GM12878 (cell line): ENCODE measurements at regions of chr21 and their contacts with region 1.

Region 1: GRCh38 chr21:36542312-36543107 is 62.6 kb upstream of the CLDN14 start:
- DNase-seq: peak; percentile 70
- ATAC-seq: peak; percentile 73
- H3K4me3 ChIP-seq: peak overlapping the region; percentile 72
- H3K27ac ChIP-seq: peak overlapping the region; percentile 59
- H3K4me1 ChIP-seq: peaks cover 12% of the 10 kb centered on the region
- H3K27me3 ChIP-seq: no peaks in the 10 kb centered on the region
- CTCF ChIP-seq: peak; percentile 70 to 79 (median 73)
- EP300 ChIP-seq: no peak; a peak in 2 of 4 replicates
- POLR2A ChIP-seq: peak; percentile 81
- RAD21 ChIP-seq: peak; percentile 87

Region 2: DNA sequence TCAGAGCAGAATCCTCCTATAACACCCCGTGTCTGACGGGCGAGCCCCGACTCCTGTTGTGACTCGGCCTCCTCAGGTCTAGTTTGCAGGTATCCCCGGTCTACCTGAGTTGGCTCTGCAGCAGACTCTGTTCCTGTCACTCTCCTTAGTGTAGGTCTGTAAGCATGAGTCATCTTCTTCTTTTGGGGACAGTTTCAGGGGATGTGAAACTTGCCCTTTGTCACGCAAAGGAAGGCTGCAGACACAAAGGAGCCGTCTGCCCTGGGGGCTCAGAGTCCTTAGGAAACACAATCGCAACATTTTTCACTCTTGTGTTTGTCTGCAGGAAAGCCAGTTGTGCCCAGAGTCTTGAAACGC is 1676.6 kb before region 1 on chr21:
- CTCF ChIA-PET with region 1: no interaction called
- POLR2A ChIA-PET with region 1: no interaction called
- RAD21 ChIA-PET with region 1: no interaction called
- SMC1A ChIA-PET with region 1: no interaction called
- in situ Hi-C with region 1: no loop called
- intact Hi-C with region 1: no loop called
- DNase-seq: peak; percentile 74
- ATAC-seq: peak; percentile 93
- H3K4me3 ChIP-seq: no peak overlapping the region; the same call in 1 of the 2 replicates
- H3K27ac ChIP-seq: peak overlapping the region; percentile 76
- H3K4me1 ChIP-seq: peaks cover 29% of the 10 kb centered on the region
- H3K27me3 ChIP-seq: no peaks in the 10 kb centered on the region; a peak in 1 of 4 replicates
- CTCF ChIP-seq: no peak
- EP300 ChIP-seq: peak; percentile 76 to 97; a peak in 3 of 4 replicates
- POLR2A ChIP-seq: no peak
- RAD21 ChIP-seq: no peak; the same call in 1 of the 2 replicates

Region 3: DNA sequence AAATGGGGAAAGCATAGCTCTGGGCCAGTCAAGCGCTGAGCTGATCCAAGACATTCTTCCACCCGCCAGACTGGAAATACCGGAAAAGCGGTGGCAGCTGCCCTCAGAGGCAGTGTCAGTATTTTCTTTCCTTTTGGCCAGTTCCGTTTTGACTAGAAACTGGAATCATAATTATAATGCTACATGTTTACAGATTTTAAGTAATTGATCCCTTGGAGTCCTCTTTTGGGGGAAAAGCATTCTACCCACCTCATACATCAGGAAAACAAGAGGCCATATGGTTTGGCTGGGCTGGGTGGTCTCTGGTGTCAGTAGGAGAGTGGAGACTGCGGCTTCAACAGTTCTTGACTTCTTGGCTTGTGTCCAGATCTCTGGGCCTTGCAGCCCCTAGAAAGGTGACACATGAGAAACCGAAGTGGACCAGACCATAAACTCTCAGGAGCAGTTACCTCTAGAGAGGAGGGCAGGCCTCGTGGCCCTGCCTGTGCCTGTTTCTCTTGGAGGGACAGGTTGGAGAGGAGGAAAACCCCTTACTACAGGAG is 32.3 kb before region 1 on chr21:
- CTCF ChIA-PET with region 1: interaction called, 67 read pairs
- POLR2A ChIA-PET with region 1: interaction called, 146 read pairs
- RAD21 ChIA-PET with region 1: interaction called, 189 read pairs
- SMC1A ChIA-PET with region 1: interaction called, 231 read pairs
- in situ Hi-C with region 1: no loop called
- intact Hi-C with region 1: no loop called
- DNase-seq: no peak
- ATAC-seq: peak; percentile 24
- H3K4me3 ChIP-seq: no peak overlapping the region
- H3K27ac ChIP-seq: peak overlapping the region; percentile 80
- H3K4me1 ChIP-seq: peaks cover 79% of the 10 kb centered on the region
- H3K27me3 ChIP-seq: no peaks in the 10 kb centered on the region
- CTCF ChIP-seq: no peak
- EP300 ChIP-seq: no peak
- POLR2A ChIP-seq: no peak
- RAD21 ChIP-seq: no peak

Region 4: DNA sequence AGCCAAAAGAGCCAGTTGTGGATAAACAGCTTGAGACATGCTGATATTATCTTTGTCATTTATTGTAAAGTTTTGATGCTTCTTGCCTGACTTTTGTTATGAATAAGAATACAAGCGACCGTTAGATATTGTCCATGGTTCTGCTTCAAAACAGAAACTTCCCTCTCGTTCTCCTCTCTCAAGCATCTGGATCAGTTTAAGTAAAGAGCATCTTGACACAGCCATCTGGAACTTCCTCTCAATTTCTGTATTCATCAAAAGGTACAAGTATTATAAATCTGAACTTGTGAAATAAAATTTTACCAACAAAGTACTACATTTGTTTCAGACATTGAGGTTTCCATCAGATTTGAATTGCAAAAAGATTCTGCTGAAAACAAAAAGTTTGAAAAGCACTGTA is 26.2 kb before region 1 on chr21:
- CTCF ChIA-PET with region 1: interaction called, 38 read pairs
- POLR2A ChIA-PET with region 1: interaction called, 146 read pairs
- RAD21 ChIA-PET with region 1: interaction called, 189 read pairs
- SMC1A ChIA-PET with region 1: interaction called, 231 read pairs
- in situ Hi-C with region 1: no loop called
- intact Hi-C with region 1: no loop called
- DNase-seq: no peak
- ATAC-seq: no peak
- H3K4me3 ChIP-seq: peak overlapping the region; percentile 43
- H3K27ac ChIP-seq: peak overlapping the region; percentile 83
- H3K4me1 ChIP-seq: peaks cover 74% of the 10 kb centered on the region
- H3K27me3 ChIP-seq: no peaks in the 10 kb centered on the region
- CTCF ChIP-seq: no peak
- EP300 ChIP-seq: no peak
- POLR2A ChIP-seq: no peak
- RAD21 ChIP-seq: no peak

Region 5: GRCh38 chr21:36589355-36589971 is 47.0 kb after region 1 on chr21:
- CTCF ChIA-PET with region 1: interaction called, 3 read pairs
- POLR2A ChIA-PET with region 1: interaction called, 3 read pairs
- RAD21 ChIA-PET with region 1: interaction called, 4 read pairs
- SMC1A ChIA-PET with region 1: interaction called, 3 read pairs
- in situ Hi-C with region 1: no loop called
- intact Hi-C with region 1: loop called (anchors 5 kb)
- DNase-seq: peak; percentile 16
- ATAC-seq: peak; percentile 99
- H3K4me3 ChIP-seq: no peak overlapping the region
- H3K27ac ChIP-seq: no peak overlapping the region
- H3K4me1 ChIP-seq: no peaks in the 10 kb centered on the region; the same call in 1 of the 2 replicates
- H3K27me3 ChIP-seq: no peaks in the 10 kb centered on the region
- CTCF ChIP-seq: peak; percentile 66 to 69 (median 67)
- EP300 ChIP-seq: no peak
- POLR2A ChIP-seq: no peak
- RAD21 ChIP-seq: peak; percentile 77